Endothelial cell of umbilical vein (primary cell): ENCODE measurements at regions of chr11 and their contacts with region 1.

Region 1: DNA sequence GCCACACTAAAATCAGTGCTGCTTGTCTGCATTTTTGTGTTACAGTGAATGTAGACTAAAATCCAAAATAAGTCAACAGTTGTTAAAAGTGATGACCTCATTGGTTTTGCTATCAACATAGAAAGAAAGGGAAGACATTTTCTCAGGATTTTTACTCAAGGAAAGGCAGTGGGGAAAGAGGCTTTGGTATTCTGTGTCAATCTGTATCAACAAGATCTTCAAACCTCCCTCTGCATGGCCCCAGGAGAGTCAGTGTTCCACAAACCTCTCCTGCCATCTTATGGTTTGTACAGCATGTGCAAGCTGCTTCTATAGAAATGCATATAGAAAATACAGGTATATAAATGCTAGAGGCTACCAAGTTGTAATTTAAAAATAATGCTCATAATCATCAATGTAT is 13.8 kb upstream of the OR51M1 start:
- DNase-seq: peak; percentile 66
- H3K4me3 ChIP-seq: no peak overlapping the region
- H3K27ac ChIP-seq: no peak overlapping the region
- H3K4me1 ChIP-seq: peaks cover 19% of the 10 kb centered on the region
- H3K27me3 ChIP-seq: no peaks in the 10 kb centered on the region
- CTCF ChIP-seq: peak; percentile 32 to 34
- POLR2A ChIP-seq: no peak

Region 2: GRCh38 chr11:5204787-5205186 is 165.0 kb before region 1 on chr11:
- CTCF ChIA-PET with region 1: interaction called, 9 read pairs
- POLR2A ChIA-PET with region 1: no interaction called
- dilution Hi-C with region 1: no loop called
- intact Hi-C with region 1: loop called (anchors 2 kb)
- DNase-seq: peak; percentile 72
- H3K4me3 ChIP-seq: no peak overlapping the region
- H3K27ac ChIP-seq: no peak overlapping the region
- H3K4me1 ChIP-seq: no peaks in the 10 kb centered on the region
- H3K27me3 ChIP-seq: no peaks in the 10 kb centered on the region
- CTCF ChIP-seq: peak; percentile 32 to 42
- POLR2A ChIP-seq: no peak

Region 3: DNA sequence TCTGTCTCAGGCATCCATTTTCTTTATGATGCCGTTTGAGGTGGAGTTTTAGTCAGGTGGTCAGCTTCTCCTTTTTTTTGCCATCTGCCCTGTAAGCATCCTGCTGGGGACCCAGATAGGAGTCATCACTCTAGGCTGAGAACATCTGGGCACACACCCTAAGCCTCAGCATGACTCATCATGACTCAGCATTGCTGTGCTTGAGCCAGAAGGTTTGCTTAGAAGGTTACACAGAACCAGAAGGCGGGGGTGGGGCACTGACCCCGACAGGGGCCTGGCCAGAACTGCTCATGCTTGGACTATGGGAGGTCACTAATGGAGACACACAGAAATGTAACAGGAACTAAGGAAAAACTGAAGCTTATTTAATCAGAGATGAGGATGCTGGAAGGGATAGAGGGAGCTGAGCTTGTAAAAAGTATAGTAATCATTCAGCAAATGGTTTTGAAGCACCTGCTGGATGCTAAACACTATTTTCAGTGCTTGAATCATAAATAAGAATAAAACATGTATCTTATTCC is 89.2 kb before region 1 on chr11:
- CTCF ChIA-PET with region 1: no interaction called
- POLR2A ChIA-PET with region 1: no interaction called
- dilution Hi-C with region 1: no loop called
- intact Hi-C with region 1: loop called (anchors 1 kb)
- DNase-seq: peak; percentile 96
- H3K4me3 ChIP-seq: no peak overlapping the region
- H3K27ac ChIP-seq: peak overlapping the region; percentile 5
- H3K4me1 ChIP-seq: peaks cover 11% of the 10 kb centered on the region
- H3K27me3 ChIP-seq: no peaks in the 10 kb centered on the region
- CTCF ChIP-seq: no peak
- POLR2A ChIP-seq: no peak